ENCODE measurements at regions of chr6 and their contacts with region 1.

Region 1: GRCh38 chr6:108113557-108114519 is 39.3 kb upstream of the OSTM1 start:
- DNase-seq: peak in 3 of 5 donors; percentile 27 to 44 (median 36)
- H3K4me3 ChIP-seq: no peak overlapping the region
- H3K27ac ChIP-seq: no peak overlapping the region
- H3K4me1 ChIP-seq: peaks cover 13% of the 10 kb centered on the region
- H3K27me3 ChIP-seq: no peaks in the 10 kb centered on the region
- CTCF ChIP-seq: peak in 2 of 3 donors; percentile 47 to 60
- EP300 ChIP-seq: no peak
- POLR2A ChIP-seq: no peak

Region 2: GRCh38 chr6:108260809-108261569 is 147.2 kb after region 1 on chr6 and contains the start of gene SNX3:
- intact Hi-C with region 1: loop called in 1 of 4 experiments (anchors 10 kb)
- DNase-seq: peak; percentile 92 to 95 (median 94)
- H3K4me3 ChIP-seq: peak within 1 kb of the TSS; percentile 83
- H3K27ac ChIP-seq: peak within 1 kb of the TSS; percentile 95 to 97
- H3K4me1 ChIP-seq: peaks cover 3% of the 10 kb centered on the region
- H3K27me3 ChIP-seq: no peaks in the 10 kb centered on the region
- CTCF ChIP-seq: no peak
- EP300 ChIP-seq: no peak
- POLR2A ChIP-seq: peak; percentile 75
- total RNA-seq, gene SNX3: 140 to 207 (median 166) TPM

Region 3: DNA sequence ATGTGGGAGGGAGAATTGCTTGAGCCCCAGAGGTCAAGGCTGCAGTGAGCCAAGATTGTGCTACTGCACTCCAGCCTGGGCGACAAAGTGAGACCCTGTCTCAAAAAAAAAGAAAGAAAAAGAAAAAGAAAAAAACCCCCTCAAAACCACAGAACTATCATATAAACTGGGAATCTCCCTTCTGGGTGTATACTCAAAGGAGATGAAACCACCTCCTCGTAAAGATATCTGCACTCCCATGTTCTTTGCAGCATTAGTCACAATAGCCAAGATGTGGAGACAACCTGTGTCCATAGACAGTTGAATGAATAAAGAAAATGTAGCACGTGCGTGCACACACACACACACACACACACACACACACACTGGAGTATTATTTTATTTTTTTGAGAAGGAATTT is 172.5 kb after region 1 on chr6:
- intact Hi-C with region 1: no loop called
- DNase-seq: no peak
- H3K4me3 ChIP-seq: no peak overlapping the region
- H3K27ac ChIP-seq: no peak overlapping the region
- H3K4me1 ChIP-seq: no peaks in the 10 kb centered on the region
- H3K27me3 ChIP-seq: no peaks in the 10 kb centered on the region
- CTCF ChIP-seq: no peak
- EP300 ChIP-seq: no peak
- POLR2A ChIP-seq: no peak

Region 4: DNA sequence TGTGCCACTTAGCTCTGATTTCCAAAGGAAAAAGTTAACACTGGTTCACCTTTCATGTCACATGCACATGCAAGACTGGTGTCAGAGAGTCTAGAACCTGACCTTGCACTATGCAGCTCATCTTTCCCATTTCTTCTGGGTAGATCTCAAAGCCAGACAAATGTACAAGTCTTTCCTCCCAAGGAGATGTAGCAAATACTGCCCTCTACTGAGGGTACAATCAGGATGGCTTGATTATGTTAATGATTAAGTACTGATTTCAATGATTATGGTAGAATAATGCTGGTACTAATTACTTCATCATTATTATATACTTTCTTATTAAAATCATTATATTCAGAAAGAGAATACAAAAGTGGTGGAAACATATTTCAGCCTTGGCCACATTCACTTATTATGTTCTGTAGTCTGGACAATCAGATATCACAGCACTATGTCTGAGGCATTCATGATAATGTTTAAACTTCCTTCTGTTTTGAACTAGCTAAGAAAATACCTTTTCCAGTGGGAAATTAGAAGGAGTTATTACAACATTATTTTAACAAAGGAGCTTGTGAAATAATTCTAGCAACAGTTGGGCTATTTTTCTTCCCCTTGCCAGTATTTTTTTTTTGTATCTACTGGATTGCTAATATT is 378.4 kb after region 1 on chr6:
- intact Hi-C with region 1: loop called in 1 of 4 experiments (anchors 10 kb)
- DNase-seq: no peak
- H3K4me3 ChIP-seq: no peak overlapping the region
- H3K27ac ChIP-seq: no peak overlapping the region
- H3K4me1 ChIP-seq: no peaks in the 10 kb centered on the region
- H3K27me3 ChIP-seq: no peaks in the 10 kb centered on the region
- CTCF ChIP-seq: peak in 1 of 3 donors; percentile 35
- EP300 ChIP-seq: no peak
- POLR2A ChIP-seq: no peak

Region 5: GRCh38 chr6:108521616-108522107 is 407.8 kb after region 1 on chr6:
- intact Hi-C with region 1: loop called (anchors 2 to 5 kb)
- DNase-seq: no peak
- H3K4me3 ChIP-seq: no peak overlapping the region
- H3K27ac ChIP-seq: no peak overlapping the region
- H3K4me1 ChIP-seq: no peaks in the 10 kb centered on the region
- H3K27me3 ChIP-seq: no peaks in the 10 kb centered on the region
- CTCF ChIP-seq: no peak
- EP300 ChIP-seq: no peak
- POLR2A ChIP-seq: no peak

Region 6: DNA sequence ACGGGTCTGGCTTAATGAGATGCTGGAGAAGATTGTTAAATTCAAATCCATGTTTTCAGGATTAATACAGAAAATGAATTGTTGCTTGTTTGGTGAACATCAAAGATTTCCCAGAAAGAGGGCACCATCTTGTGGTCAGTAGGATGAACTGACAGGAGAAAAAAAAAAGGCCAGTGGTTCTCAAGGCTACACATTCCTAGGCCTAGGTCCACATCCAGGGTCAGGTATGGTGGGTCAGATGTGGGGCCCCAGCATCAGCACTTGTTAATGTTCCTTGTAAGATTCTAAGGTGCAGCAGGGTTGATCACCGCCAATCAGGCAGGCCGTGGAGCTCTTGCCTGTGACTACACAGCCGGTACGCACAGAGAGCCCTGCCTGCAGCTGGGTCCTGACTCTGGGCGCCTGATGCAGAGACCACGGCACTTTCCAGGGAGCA is 412.9 kb after region 1 on chr6:
- intact Hi-C with region 1: loop called (anchors 2 to 5 kb)
- DNase-seq: no peak
- H3K4me3 ChIP-seq: no peak overlapping the region
- H3K27ac ChIP-seq: no peak overlapping the region
- H3K4me1 ChIP-seq: no peaks in the 10 kb centered on the region
- H3K27me3 ChIP-seq: no peaks in the 10 kb centered on the region
- CTCF ChIP-seq: peak; percentile 44 to 77 (median 57)
- EP300 ChIP-seq: no peak
- POLR2A ChIP-seq: no peak

Region 7: DNA sequence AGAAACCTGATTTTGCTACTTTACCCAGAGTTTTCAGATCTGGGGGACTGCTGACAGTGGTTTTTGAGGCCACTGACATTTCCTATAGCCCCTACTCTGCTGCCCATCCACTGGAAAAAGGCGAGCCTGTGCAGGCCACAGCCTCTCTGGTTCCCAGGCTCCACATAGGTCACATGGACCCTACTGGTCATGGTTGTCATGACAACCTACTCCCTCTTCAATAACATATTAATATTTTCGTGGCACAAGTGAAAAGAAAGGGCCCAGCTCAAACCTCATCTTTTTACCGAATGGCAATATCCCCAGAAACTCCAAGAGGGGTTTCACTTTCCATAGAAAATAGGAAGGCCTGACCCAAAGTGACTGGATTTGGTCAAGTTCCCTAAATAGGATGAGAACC is 435.9 kb after region 1 on chr6:
- intact Hi-C with region 1: no loop called
- DNase-seq: no peak
- H3K4me3 ChIP-seq: no peak overlapping the region
- H3K27ac ChIP-seq: no peak overlapping the region
- H3K4me1 ChIP-seq: peaks cover 3% of the 10 kb centered on the region
- H3K27me3 ChIP-seq: no peaks in the 10 kb centered on the region
- CTCF ChIP-seq: no peak
- EP300 ChIP-seq: no peak
- POLR2A ChIP-seq: no peak